SK-N-SH (cell line): ENCODE measurements at regions of chr17 and their contacts with region 1.

Region 1: GRCh38 chr17:5438716-5439445 is at the start of gene C1QBP:
- DNase-seq: peak; percentile 94
- H3K4me3 ChIP-seq: peak within 1 kb of the TSS; percentile 85 to 94
- H3K27ac ChIP-seq: peak within 1 kb of the TSS; percentile 54 to 86
- H3K4me1 ChIP-seq: peaks cover 0 to 21% of the 10 kb centered on the region in 2 experiments; a peak in 3 of 4 replicates
- H3K27me3 ChIP-seq: no peaks in the 10 kb centered on the region
- CTCF ChIP-seq: peak; percentile 97
- EP300 ChIP-seq: 0 out of 4 replicates have a peak, but pooled peaks have one; percentile 9 to 22
- RAD21 ChIP-seq: peak; percentile 63
- polyA plus RNA-seq, gene C1QBP: 269 and 277 TPM in 2 replicates

Region 2: DNA sequence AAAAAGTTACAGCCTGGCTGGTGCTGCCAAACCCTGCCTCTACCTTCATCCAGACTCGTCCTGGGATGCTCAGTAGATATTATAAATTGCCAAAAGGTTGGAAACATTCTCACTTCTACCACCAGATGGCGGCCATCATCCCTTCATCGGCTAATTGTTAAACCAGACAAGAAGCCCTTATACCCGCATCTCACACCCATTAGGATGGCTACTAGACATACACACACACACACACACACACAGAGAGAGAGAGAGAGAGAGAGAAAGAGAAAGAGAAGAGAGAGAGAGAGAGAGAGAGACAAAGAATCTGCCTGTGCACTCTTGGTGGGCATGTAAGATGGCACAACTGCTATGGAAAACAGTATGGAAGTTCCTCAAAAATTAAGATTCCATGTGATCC is 189.3 kb before region 1 on chr17:
- CTCF ChIA-PET with region 1: interaction called, 42 read pairs
- POLR2A ChIA-PET with region 1: no interaction called
- DNase-seq: peak; percentile 78
- H3K4me3 ChIP-seq: peak overlapping the region in 1 of 2 experiments; percentile 47; a peak in 1 of 4 replicates
- H3K27ac ChIP-seq: no peak overlapping the region
- H3K4me1 ChIP-seq: no peaks in the 10 kb centered on the region
- H3K27me3 ChIP-seq: no peaks in the 10 kb centered on the region
- CTCF ChIP-seq: peak; percentile 74
- EP300 ChIP-seq: no peak
- RAD21 ChIP-seq: peak; percentile 85

Region 3: GRCh38 chr17:5254903-5255526 is 183.9 kb before region 1 on chr17:
- CTCF ChIA-PET with region 1: interaction called, 42 read pairs
- POLR2A ChIA-PET with region 1: no interaction called
- DNase-seq: no peak
- H3K4me3 ChIP-seq: no peak overlapping the region
- H3K27ac ChIP-seq: no peak overlapping the region
- H3K4me1 ChIP-seq: no peaks in the 10 kb centered on the region
- H3K27me3 ChIP-seq: no peaks in the 10 kb centered on the region
- CTCF ChIP-seq: no peak
- EP300 ChIP-seq: no peak
- RAD21 ChIP-seq: no peak

Region 4: DNA sequence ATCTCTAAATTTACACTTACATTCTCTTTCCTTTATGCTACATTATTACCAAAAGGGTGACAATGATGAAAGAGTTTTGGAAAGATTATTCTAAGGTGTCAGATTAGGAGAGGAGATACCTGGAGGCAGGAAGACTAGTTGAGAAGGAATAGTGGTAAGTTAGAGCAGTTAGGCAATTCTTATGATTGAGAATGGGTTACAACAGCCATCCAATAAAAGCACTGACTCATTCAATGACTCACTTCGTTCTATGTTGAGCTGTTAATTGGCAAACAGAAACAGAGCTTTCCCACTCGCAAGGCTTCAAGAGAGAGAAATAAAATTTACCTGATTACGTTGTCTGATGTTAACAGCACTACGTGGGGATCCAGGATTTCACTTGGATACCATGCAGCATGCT is 25.2 kb before region 1 on chr17:
- CTCF ChIA-PET with region 1: interaction called, 12 read pairs
- POLR2A ChIA-PET with region 1: no interaction called
- DNase-seq: no peak
- H3K4me3 ChIP-seq: no peak overlapping the region
- H3K27ac ChIP-seq: peak overlapping the region in 1 of 2 experiments; percentile 73; a peak in 2 of 4 replicates
- H3K4me1 ChIP-seq: peaks cover 0 to 12% of the 10 kb centered on the region in 2 experiments; a peak in 3 of 4 replicates
- H3K27me3 ChIP-seq: no peaks in the 10 kb centered on the region
- CTCF ChIP-seq: no peak
- EP300 ChIP-seq: no peak
- RAD21 ChIP-seq: no peak

Region 5: GRCh38 chr17:5419356-5419958 is 19.4 kb before region 1 on chr17 and contains the start of gene NUP88:
- CTCF ChIA-PET with region 1: interaction called, 84 read pairs
- POLR2A ChIA-PET with region 1: interaction called, 5 read pairs
- DNase-seq: peak; percentile 96
- H3K4me3 ChIP-seq: peak within 1 kb of the TSS; percentile 87 to 100
- H3K27ac ChIP-seq: peak within 1 kb of the TSS; percentile 76 to 82; a peak in 3 of 4 replicates
- H3K4me1 ChIP-seq: peaks cover 6 to 17% of the 10 kb centered on the region in 2 experiments
- H3K27me3 ChIP-seq: no peaks in the 10 kb centered on the region
- CTCF ChIP-seq: no peak
- EP300 ChIP-seq: no peak
- RAD21 ChIP-seq: no peak
- polyA plus RNA-seq, gene NUP88: 54.1 and 62.4 TPM in 2 replicates

Region 6: GRCh38 chr17:5468075-5468473 is 29.2 kb after region 1 on chr17:
- CTCF ChIA-PET with region 1: interaction called, 66 read pairs
- POLR2A ChIA-PET with region 1: interaction called, 3 read pairs
- DNase-seq: peak; percentile 36
- H3K4me3 ChIP-seq: peak overlapping the region; percentile 88 to 98
- H3K27ac ChIP-seq: peak overlapping the region; percentile 63 to 74
- H3K4me1 ChIP-seq: peaks cover 0 to 13% of the 10 kb centered on the region in 2 experiments; a peak in 2 of 4 replicates
- H3K27me3 ChIP-seq: no peaks in the 10 kb centered on the region
- CTCF ChIP-seq: no peak
- EP300 ChIP-seq: no peak
- RAD21 ChIP-seq: no peak

Region 7: GRCh38 chr17:5486204-5487124 is 47.6 kb after region 1 on chr17 and contains the start of gene MIS12:
- CTCF ChIA-PET with region 1: interaction called, 20 read pairs
- POLR2A ChIA-PET with region 1: no interaction called
- DNase-seq: peak; percentile 98
- H3K4me3 ChIP-seq: peak within 1 kb of the TSS; percentile 93 to 99
- H3K27ac ChIP-seq: peak within 1 kb of the TSS; percentile 98
- H3K4me1 ChIP-seq: peaks cover 15 to 16% of the 10 kb centered on the region in 2 experiments; a peak in 3 of 4 replicates
- H3K27me3 ChIP-seq: no peaks in the 10 kb centered on the region
- CTCF ChIP-seq: no peak
- EP300 ChIP-seq: no peak; a peak in 1 of 4 replicates
- RAD21 ChIP-seq: no peak
- polyA plus RNA-seq, gene MIS12: 9.3 and 12.4 TPM in 2 replicates

Region 8: DNA sequence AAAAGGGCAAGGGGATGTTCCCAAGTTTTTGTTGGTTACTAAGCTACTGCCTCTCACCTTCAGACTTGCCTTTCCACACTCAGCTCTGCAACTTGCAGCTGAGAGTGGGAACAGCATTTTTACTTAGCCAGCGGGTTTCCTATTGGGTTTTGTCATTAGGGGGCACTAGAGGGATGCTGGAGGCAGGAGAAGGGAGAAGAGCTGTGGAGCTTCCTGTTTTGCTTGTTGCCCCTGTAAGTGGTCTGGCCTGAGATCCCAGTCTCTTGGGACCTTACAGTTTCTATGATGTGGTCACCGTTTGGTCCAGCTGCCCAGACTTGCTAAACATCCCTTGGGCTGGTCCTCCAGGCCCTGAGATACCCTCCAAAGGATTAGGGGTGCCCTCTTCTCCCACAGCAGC is 355.0 kb after region 1 on chr17:
- CTCF ChIA-PET with region 1: no interaction called
- POLR2A ChIA-PET with region 1: no interaction called
- DNase-seq: no peak
- H3K4me3 ChIP-seq: no peak overlapping the region
- H3K27ac ChIP-seq: no peak overlapping the region
- H3K4me1 ChIP-seq: no peaks in the 10 kb centered on the region
- H3K27me3 ChIP-seq: peaks cover 17% of the 10 kb centered on the region; the same call in 1 of the 2 replicates
- CTCF ChIP-seq: no peak
- EP300 ChIP-seq: no peak
- RAD21 ChIP-seq: no peak